Sciatic nerve (tissue), 2 donors: ENCODE measurements at regions of chr12 and their contacts with region 1.

Region 1: DNA sequence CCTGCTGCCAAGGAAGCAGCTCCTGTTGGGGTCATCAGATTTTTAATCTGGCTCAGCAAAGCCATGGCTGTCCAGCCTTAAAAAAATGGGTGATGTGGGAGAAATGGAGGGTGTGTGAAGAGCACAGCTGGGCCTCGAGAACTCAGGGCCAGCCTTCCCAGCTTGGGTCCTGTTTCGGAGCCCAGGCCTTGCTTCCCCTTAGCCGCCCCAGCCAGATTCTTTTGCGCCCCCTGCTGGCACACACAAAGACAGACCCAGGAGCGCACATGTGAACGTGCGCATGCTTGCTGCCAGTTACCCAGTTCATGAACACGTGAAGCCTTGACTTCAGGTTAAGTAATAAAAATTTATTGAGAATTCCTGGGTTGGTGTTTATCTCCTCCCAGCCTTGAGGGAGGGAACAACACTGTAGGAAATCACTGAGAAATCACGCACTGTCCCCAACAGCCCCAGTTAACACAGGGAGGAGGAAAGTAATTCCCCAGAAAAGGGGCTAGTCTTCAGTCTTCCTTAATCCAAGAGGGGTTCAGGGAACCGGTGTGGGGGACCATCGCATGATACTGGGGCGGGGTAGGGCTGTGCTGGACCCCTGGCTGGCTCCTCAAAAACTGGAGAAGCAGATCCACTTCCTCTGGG is 5.3 kb downstream of the PHB2 start:
- DNase-seq: peak; percentile 93
- ATAC-seq: peak; percentile 80

Region 2: DNA sequence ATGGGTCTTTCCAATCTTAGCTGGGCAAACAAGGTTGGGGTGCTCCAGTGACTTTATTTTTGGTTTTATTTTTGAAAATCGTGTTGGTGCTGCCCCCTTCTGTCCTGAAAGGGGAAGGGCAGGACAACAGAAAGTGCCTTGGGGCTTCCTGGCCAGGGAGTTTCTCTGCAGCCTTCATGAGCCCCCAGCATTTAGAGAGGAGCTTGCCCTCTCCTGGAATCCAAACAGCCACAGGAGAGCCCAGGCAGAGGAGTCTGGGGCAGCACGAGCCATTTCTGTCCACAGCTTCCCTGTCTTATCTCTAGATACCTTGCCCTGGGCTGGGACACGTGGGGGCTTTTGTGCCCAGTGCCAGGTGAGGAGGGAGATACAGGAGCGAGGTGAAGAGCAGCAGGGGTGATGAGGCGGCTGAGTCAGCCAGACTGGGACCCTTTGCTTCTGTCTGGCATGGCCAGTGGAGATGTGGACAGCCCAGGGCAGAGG is 148.3 kb after region 1 on chr12:
- intact Hi-C with region 1: loop called (anchors 10 kb)
- DNase-seq: peak; percentile 59
- ATAC-seq: no peak